ENCODE measurements at regions of chr15 and their contacts with region 1.

Region 1: DNA sequence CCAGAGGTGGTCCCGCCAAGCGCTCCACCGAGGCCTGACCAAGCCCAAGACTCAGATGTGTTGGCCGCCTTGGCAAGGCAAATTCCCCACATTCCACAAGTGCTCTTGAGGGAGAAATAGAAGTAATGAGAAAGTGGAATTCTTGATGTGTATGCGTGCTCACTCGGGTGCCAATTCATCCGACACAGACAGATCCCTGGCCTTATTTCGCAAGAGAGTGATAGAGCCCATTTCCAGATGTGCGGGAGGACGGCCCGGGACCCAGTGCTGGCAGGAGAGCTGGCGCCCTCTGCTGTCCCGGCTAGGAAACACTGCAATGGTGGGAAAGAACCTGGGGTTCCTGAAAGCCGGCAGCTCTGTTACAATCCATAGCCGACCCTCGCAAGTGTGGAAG is 76.0 kb downstream of the HMG20A start:
- DNase-seq: peak; percentile 65
- H3K4me3 ChIP-seq: no peak overlapping the region
- H3K27ac ChIP-seq: no peak overlapping the region
- H3K4me1 ChIP-seq: peaks cover 22% of the 10 kb centered on the region
- CTCF ChIP-seq: peak; percentile 95

Region 2: DNA sequence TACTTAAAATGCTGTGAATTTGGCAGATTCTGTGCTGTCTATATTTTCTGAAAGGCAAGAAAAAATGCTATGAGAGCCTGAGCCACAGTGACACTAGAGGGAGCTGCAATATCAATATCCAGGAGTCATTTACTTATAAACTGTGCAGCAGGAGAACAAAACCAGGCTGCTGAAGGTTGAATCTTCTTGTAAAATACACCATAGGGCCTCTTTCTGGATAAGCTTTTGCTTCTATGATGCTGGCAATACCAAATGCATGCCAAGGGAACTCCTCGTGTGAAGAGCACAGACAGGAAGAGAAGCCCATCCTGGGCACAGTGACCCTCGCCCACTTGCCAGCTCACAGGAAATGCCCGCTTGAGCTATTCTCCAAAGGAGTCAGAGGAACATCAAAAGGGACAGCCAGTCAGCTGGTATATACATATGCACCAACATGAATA is 377.8 kb before region 1 on chr15:
- CTCF ChIA-PET with region 1: no interaction called
- POLR2A ChIA-PET with region 1: no interaction called
- intact Hi-C with region 1: loop called (anchors 2 kb)
- DNase-seq: peak; percentile 67
- H3K4me3 ChIP-seq: no peak overlapping the region
- H3K27ac ChIP-seq: no peak overlapping the region
- H3K4me1 ChIP-seq: no peaks in the 10 kb centered on the region
- CTCF ChIP-seq: peak; percentile 94

Region 3: GRCh38 chr15:77186594-77187011 is 310.1 kb before region 1 on chr15:
- CTCF ChIA-PET with region 1: interaction called, 5 read pairs
- POLR2A ChIA-PET with region 1: no interaction called
- intact Hi-C with region 1: loop called (anchors 1 kb)
- DNase-seq: peak; percentile 48
- H3K4me3 ChIP-seq: no peak overlapping the region
- H3K27ac ChIP-seq: no peak overlapping the region
- H3K4me1 ChIP-seq: peaks cover 49% of the 10 kb centered on the region
- CTCF ChIP-seq: peak; percentile 81

Region 4: GRCh38 chr15:77419836-77420609 is 76.7 kb before region 1 on chr15 and contains the start of gene PEAK1:
- CTCF ChIA-PET with region 1: no interaction called
- POLR2A ChIA-PET with region 1: interaction called, 3 read pairs
- intact Hi-C with region 1: loop called (anchors 2 kb)
- DNase-seq: peak; percentile 98
- H3K4me3 ChIP-seq: peak within 1 kb of the TSS; percentile 88
- H3K27ac ChIP-seq: peak within 1 kb of the TSS; percentile 80
- H3K4me1 ChIP-seq: peaks cover 22% of the 10 kb centered on the region
- CTCF ChIP-seq: no peak
- total RNA-seq, gene PEAK1: 6.0 and 8.9 TPM in 2 replicates

Region 5: DNA sequence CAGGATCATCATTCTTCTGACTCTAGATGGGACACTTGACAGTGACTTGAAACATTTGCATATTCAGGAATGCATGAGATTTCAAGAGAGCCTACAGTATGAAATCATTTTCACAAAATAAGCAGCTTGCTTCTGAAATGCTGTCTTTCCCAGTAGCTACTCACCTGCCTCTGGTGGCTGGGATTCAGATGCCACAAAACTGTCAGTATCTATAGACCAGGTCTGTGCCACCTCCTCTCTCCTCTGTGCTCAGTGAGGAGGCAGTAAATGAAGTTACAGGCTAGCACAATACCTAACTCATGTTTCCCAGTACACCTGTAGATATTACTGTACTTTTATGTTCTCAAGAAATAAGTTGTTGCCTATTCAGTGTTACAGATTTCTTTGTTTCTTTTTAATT is 11.7 kb before region 1 on chr15:
- CTCF ChIA-PET with region 1: no interaction called
- POLR2A ChIA-PET with region 1: no interaction called
- intact Hi-C with region 1: no loop called
- DNase-seq: no peak
- H3K4me3 ChIP-seq: no peak overlapping the region
- H3K27ac ChIP-seq: no peak overlapping the region
- H3K4me1 ChIP-seq: no peaks in the 10 kb centered on the region
- CTCF ChIP-seq: no peak

Region 6: DNA sequence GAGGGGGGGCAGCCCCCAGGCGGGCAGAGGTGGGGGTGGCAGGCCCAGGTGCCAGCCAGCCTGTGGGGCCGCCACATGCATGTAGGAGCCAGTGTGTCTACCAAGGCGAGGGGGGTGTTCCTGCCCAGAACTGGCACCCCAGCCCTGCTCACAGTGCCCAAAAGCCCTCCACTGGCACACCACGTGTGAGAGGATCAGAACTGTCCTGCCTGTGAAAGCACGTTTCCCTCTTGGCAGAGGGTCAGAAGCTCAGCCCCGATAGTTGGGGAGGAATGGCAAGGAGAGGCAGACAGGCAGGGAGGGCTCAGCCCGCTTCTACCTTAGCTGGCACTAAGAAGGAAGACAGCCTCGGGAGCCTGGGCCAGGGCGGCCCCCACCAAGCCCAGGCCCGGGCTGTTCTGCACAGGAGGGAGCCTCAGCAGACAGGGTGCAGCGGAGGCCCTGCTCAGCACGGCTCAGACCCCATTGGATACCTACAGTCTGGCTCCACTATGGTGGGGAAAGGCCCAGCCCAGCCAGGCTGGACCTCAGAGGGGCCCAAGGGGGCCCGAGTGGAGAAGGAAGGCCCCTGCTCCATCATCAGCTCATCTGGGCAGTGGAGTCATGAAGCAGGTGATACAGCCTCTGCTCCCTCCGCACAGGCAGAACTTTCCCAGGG is 220.8 kb after region 1 on chr15:
- CTCF ChIA-PET with region 1: no interaction called
- POLR2A ChIA-PET with region 1: no interaction called
- intact Hi-C with region 1: no loop called
- DNase-seq: no peak
- H3K4me3 ChIP-seq: no peak overlapping the region
- H3K27ac ChIP-seq: no peak overlapping the region
- H3K4me1 ChIP-seq: no peaks in the 10 kb centered on the region
- CTCF ChIP-seq: no peak

Measured in OCI-LY7 (cell line).